ENCODE measurements at regions of chr1 and their contacts with region 1.

Region 1: DNA sequence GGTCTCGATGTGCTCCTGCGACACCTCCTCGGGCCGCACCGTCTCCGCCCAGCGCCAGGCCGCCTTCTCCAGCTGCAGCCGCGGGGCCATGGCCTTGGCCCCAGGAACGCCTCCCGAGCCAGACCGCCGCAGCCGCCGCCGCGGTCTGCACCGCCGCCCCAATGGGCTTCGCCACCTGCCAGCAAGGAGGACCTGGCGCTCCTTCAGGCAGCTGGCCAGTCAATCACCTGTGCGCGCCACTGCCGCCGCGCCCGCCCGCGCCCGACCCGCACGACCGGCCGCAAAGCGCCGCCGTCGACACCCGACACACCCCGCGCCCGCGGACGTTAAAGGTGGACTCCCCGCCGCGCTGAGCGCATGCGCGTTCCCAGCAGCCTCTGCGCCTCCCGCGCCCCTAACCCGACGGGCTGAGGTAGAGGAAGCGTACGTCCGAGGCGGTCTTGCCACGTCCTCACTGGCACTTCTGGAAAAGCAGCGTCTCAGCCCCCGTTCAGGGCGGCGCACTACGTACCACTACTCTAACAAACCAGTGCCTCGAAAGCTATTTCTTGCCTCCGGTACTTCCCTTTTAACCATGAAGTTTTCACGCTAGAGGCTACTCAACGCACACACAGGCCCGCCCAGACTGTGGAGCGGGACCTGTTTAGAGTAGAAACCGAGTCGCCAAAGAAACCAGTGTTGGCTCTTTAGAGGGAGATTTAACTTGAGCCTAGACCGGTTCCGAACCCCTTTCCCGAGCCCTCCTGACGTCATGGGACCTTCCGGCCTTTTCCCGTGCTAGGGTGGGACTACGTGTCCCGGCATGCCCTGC is at the start of gene USP48:
- DNase-seq: peak; percentile 82 to 97
- H3K4me3 ChIP-seq: peak within 1 kb of the TSS; percentile 96
- H3K27ac ChIP-seq: peak within 1 kb of the TSS; percentile 99
- H3K4me1 ChIP-seq: peaks cover 12% of the 10 kb centered on the region
- H3K27me3 ChIP-seq: no peaks in the 10 kb centered on the region
- CTCF ChIP-seq: 0 out of 2 replicates have a peak, but pooled peaks have one; percentile 13
- total RNA-seq, gene USP48: 63.1 and 63.5 TPM in 2 replicates

Region 2: DNA sequence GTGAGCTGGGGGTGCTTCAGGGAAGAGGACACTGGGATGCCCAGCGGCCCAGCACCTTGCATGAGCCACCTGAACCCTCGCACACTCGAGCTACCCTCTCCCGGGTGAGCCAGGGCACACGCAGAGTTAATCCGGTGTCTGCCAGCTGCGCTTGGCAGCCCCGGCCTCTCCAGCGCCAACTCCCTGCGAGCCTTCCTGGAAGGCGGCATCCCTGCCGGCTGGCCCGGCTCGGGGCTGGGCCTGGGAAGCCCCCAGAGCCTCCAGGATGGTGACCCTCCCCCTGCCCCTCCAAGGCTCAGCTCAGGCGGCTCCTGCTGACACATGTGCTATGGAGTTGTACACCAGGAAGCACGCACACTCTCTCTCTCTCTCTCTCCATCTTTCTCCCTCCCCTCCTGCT is 162.6 kb before region 1 on chr1:
- CTCF ChIA-PET with region 1: no interaction called
- POLR2A ChIA-PET with region 1: no interaction called
- intact Hi-C with region 1: no loop called
- DNase-seq: no peak
- H3K4me3 ChIP-seq: no peak overlapping the region
- H3K27ac ChIP-seq: no peak overlapping the region
- H3K4me1 ChIP-seq: peaks cover 21% of the 10 kb centered on the region
- H3K27me3 ChIP-seq: no peaks in the 10 kb centered on the region
- CTCF ChIP-seq: no peak

Region 3: DNA sequence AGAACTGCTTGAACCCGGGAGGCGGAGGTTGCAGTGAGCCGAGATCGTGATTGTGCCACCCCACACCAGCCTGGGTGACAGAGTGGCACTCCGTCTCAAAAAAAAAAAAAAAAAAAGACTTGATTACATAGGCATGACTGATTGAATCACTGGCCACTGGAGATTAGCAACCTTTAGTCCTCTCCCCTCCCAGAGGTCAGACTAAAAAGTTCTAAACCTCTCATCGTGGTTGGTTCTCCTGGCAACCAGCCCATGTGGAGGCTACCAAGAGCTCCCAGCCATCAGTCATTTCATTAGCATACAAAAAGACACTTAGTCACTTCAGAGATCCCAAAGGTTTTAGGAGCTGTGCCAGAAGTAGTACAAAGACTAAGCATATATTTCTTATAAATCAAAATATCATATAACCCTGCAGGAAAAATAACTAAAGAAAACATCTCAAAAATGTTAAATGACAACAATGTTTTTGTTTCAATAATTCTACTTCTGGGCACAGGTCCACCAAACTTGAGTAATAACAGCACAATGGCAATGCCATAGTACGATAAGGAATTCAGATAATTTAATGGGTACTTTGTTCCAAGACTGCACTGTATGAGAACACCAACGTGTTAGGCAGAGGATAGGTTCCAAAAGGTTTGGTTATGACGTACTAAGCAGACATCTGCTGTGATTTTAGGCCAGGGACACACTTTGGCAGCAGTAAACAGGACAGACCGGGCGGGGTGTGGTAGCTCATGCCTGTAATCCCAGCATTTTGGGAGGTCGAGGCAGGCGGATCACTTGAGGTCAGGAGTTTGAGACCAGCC is 18.3 kb before region 1 on chr1:
- CTCF ChIA-PET with region 1: no interaction called
- POLR2A ChIA-PET with region 1: no interaction called
- intact Hi-C with region 1: loop called (anchors 2 kb)
- DNase-seq: peak; percentile 88 to 96
- H3K4me3 ChIP-seq: no peak overlapping the region
- H3K27ac ChIP-seq: peak overlapping the region; percentile 60
- H3K4me1 ChIP-seq: peaks cover 26% of the 10 kb centered on the region
- H3K27me3 ChIP-seq: no peaks in the 10 kb centered on the region
- CTCF ChIP-seq: no peak

Region 4: GRCh38 chr1:21814241-21814918 is 31.3 kb after region 1 on chr1:
- CTCF ChIA-PET with region 1: interaction called, 12 read pairs
- POLR2A ChIA-PET with region 1: interaction called, 6 read pairs
- intact Hi-C with region 1: loop called (anchors 2 kb)
- DNase-seq: no peak
- H3K4me3 ChIP-seq: no peak overlapping the region
- H3K27ac ChIP-seq: no peak overlapping the region
- H3K4me1 ChIP-seq: peaks cover 33% of the 10 kb centered on the region
- H3K27me3 ChIP-seq: no peaks in the 10 kb centered on the region
- CTCF ChIP-seq: no peak; the same call in 1 of the 2 replicates

Region 5: GRCh38 chr1:21937372-21938221 is 154.5 kb after region 1 on chr1:
- CTCF ChIA-PET with region 1: no interaction called
- POLR2A ChIA-PET with region 1: no interaction called
- intact Hi-C with region 1: loop called (anchors 10 kb)
- DNase-seq: peak in 1 of 2 experiments; percentile 74
- H3K4me3 ChIP-seq: peak overlapping the region; percentile 46; the same call in 1 of the 2 replicates
- H3K27ac ChIP-seq: no peak overlapping the region
- H3K4me1 ChIP-seq: peaks cover 44% of the 10 kb centered on the region
- H3K27me3 ChIP-seq: no peaks in the 10 kb centered on the region
- CTCF ChIP-seq: no peak

Region 6: GRCh38 chr1:21963477-21964217 is 180.6 kb after region 1 on chr1:
- CTCF ChIA-PET with region 1: no interaction called
- POLR2A ChIA-PET with region 1: no interaction called
- intact Hi-C with region 1: loop called (anchors 5 kb)
- DNase-seq: peak; percentile 50 to 82
- H3K4me3 ChIP-seq: no peak overlapping the region
- H3K27ac ChIP-seq: no peak overlapping the region
- H3K4me1 ChIP-seq: peaks cover 9% of the 10 kb centered on the region; the same call in 1 of the 2 replicates
- H3K27me3 ChIP-seq: no peaks in the 10 kb centered on the region
- CTCF ChIP-seq: peak; percentile 86

Region 7: GRCh38 chr1:22105611-22106207 is 322.6 kb after region 1 on chr1:
- CTCF ChIA-PET with region 1: no interaction called
- POLR2A ChIA-PET with region 1: no interaction called
- intact Hi-C with region 1: no loop called
- DNase-seq: peak in 1 of 2 experiments; percentile 21
- H3K4me3 ChIP-seq: no peak overlapping the region
- H3K27ac ChIP-seq: no peak overlapping the region
- H3K4me1 ChIP-seq: no peaks in the 10 kb centered on the region
- H3K27me3 ChIP-seq: no peaks in the 10 kb centered on the region
- CTCF ChIP-seq: peak; percentile 88

Measured in PC-9 (cell line).